Activated CD8-positive, alpha-beta T cell treated with anti-CD3 and anti-CD28 coated beads, Interleukin-2, amount 10 ng/mL, durations not matched to agents 7 days and 5 days (primary cell): ENCODE measurements at regions of chr17 and their contacts with region 1.

Region 1: DNA sequence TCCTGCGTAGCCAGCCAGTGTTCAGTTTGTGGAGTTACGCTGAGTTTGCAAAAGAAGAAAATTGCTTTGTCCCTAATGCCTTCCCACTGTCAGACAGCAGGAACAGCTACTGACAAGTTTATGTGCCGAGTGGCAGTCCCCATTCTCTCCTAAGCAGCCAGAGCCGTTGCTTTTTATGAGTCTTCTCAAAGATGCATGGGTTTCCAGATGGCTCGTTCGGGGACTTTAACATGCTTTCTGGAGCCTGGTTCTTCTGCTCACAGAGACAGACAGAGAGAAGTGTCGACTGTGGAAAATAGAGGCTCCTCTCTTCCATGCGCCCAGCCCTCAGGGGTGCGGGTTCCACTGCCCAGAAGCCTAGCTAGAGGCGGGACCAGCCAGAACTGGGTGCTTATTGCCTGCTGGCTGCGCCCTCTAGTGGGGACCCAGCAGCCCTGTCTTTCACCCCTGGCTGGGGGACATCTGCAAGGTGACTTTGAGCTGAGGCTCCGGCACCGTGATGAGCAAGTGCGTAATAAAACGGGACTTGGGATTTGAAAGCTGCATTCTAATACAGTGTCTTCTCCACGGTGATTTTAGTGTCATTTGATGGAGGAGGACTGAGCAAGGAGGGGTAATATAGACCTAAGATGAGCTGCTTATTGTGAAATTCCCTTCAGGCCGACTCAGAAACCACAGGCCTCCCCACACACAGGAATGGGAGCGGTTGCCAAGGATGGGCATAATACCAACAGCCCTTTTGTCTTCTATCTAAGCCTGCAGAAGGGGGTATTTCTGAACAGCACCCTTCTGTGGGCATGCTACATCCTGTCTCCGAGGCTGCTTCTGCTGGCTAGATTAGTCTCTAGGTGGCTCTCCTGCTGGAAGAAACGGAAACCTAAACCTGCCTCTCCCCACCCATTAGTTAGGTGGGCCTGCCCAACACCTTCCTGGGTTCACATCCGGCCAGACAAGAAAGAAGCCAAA is 73.1 kb downstream of the CCDC182 start:
- DNase-seq: peak; percentile 87
- ATAC-seq: peak; percentile 93
- H3K4me3 Mint-ChIP-seq: peak overlapping the region; percentile 66
- H3K27ac Mint-ChIP-seq: peak overlapping the region; percentile 96
- H3K4me1 Mint-ChIP-seq: peaks cover 66% of the 10 kb centered on the region
- H3K27me3 Mint-ChIP-seq: no peaks in the 10 kb centered on the region

Region 2: GRCh38 chr17:57255776-57256681 is 415.9 kb before region 1 on chr17 and contains the start of gene MSI2:
- CTCF ChIA-PET with region 1: interaction called, 10 read pairs
- POLR2A ChIA-PET with region 1: no interaction called
- DNase-seq: peak; percentile 94
- ATAC-seq: peak; percentile 85
- H3K4me3 Mint-ChIP-seq: peak within 1 kb of the TSS; percentile 84
- H3K27ac Mint-ChIP-seq: peak within 1 kb of the TSS; percentile 88
- H3K4me1 Mint-ChIP-seq: peaks cover 48% of the 10 kb centered on the region
- H3K27me3 Mint-ChIP-seq: peaks cover 6% of the 10 kb centered on the region
- total RNA-seq, gene MSI2: 123 to 125 TPM

Region 3: GRCh38 chr17:57523926-57524632 is 147.9 kb before region 1 on chr17:
- CTCF ChIA-PET with region 1: no interaction called
- POLR2A ChIA-PET with region 1: no interaction called
- DNase-seq: no peak
- ATAC-seq: no peak
- H3K4me3 Mint-ChIP-seq: no peak overlapping the region
- H3K27ac Mint-ChIP-seq: peak overlapping the region; percentile 67
- H3K4me1 Mint-ChIP-seq: peaks cover 19% of the 10 kb centered on the region
- H3K27me3 Mint-ChIP-seq: no peaks in the 10 kb centered on the region

Region 4: DNA sequence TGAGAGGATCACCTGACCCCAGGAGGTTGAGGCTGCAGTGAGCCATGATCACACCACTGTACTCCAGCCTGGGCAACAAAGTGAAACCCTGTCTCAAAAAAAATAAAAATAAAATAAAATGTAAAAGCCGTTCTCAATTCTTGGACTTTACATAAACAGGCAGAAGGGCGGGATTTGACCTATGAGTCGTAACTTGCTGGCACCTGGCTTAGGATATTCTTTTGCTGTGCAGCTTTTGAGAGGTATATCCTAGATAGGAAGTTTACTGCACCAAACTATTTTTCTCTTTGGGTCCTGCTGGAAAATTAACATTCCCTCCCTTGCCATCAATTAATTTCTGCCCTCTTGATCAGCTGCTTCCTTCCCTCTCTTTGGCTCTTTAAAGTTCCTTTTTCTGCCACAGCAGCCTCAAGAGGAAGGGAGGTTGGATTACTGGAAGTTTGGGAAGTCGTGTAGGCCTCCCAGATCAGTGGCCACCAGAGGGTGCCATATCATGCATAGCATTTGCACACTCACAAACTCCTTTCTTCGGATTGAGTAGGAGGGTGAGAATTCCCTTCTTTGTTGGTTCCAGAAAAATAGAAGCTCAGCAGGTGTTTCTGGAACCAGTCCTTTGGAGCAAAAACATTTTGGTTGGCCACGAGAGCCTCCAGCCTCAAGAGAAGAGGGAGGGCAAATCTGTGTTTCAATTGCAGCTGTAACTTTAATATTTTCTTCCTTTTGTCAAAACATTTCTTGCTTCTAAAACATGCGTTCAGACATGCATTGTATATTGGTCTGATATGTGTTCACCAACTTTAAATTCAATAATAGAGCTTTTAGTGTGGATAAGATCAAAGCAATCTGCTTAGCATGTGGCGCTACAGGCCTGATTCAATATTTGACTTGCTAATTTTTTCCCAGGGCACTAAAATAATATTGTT is 74.2 kb before region 1 on chr17:
- CTCF ChIA-PET with region 1: interaction called, 196 read pairs
- POLR2A ChIA-PET with region 1: interaction called, 13 read pairs
- DNase-seq: peak; percentile 58
- ATAC-seq: no peak
- H3K4me3 Mint-ChIP-seq: no peak overlapping the region
- H3K27ac Mint-ChIP-seq: peak overlapping the region; percentile 98
- H3K4me1 Mint-ChIP-seq: peaks cover 82% of the 10 kb centered on the region
- H3K27me3 Mint-ChIP-seq: no peaks in the 10 kb centered on the region

Region 5: GRCh38 chr17:57657201-57657600 is 14.7 kb before region 1 on chr17:
- CTCF ChIA-PET with region 1: interaction called, 29 read pairs
- POLR2A ChIA-PET with region 1: interaction called, 3 read pairs
- DNase-seq: no peak
- ATAC-seq: no peak
- H3K4me3 Mint-ChIP-seq: no peak overlapping the region
- H3K27ac Mint-ChIP-seq: no peak overlapping the region
- H3K4me1 Mint-ChIP-seq: peaks cover 5% of the 10 kb centered on the region
- H3K27me3 Mint-ChIP-seq: no peaks in the 10 kb centered on the region

Region 6: DNA sequence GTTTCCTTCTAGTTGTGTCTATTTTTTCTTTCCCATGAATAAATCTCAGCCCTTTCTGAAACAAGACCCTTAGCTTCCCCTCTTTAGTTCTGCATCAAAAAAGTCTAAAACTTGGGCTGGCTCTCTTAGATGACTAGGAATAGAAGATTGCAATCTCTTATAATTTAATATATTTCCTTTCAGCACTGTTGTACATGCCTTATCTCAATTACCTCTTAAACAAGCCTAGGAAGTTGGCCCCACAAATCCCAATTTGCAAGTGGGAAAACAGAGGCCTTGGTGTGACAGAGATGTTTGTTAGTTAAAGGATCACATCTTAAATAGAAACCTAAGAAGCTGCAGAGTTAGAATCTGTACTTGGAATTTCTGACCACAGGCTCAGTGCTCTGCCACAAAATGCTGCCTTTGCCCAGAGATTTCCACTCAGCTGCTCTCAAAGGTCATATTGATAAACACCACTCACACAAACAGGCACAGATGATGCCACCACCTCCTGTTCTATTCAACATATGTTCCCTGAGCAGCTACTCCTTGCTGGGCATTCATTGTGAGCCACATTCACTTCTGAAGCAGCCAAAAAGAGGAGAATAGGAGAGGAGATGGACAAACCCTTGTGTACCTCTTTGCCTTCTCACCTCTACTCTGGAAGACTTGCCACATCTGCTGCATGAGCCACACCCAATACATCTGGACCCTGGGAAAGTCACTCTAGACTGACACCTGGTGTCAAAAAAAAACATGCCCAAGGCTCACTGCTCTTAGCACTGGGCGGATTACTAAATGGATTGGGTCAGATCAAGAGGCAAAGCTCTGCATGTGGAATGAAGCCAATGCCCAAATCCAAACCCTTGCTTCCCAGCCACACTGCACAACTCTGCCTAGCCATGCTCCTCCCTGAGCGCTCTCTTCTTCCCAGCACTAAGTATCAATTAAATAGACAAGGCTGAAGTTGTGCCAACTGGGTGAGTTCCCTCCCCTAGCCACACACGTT is 67.7 kb after region 1 on chr17:
- CTCF ChIA-PET with region 1: interaction called, 20 read pairs
- POLR2A ChIA-PET with region 1: no interaction called
- DNase-seq: peak; percentile 50
- ATAC-seq: peak; percentile 75
- H3K4me3 Mint-ChIP-seq: no peak overlapping the region
- H3K27ac Mint-ChIP-seq: peak overlapping the region; percentile 4
- H3K4me1 Mint-ChIP-seq: peaks cover 19% of the 10 kb centered on the region
- H3K27me3 Mint-ChIP-seq: peaks cover 7% of the 10 kb centered on the region

Region 7: GRCh38 chr17:57833179-57833939 is 161.4 kb after region 1 on chr17:
- CTCF ChIA-PET with region 1: interaction called, 12 read pairs
- POLR2A ChIA-PET with region 1: no interaction called
- DNase-seq: peak; percentile 84
- ATAC-seq: peak; percentile 67
- H3K4me3 Mint-ChIP-seq: peak overlapping the region; percentile 35
- H3K27ac Mint-ChIP-seq: peak overlapping the region; percentile 80
- H3K4me1 Mint-ChIP-seq: no peaks in the 10 kb centered on the region
- H3K27me3 Mint-ChIP-seq: no peaks in the 10 kb centered on the region